Activated T-helper 1 cell treated with anti-CD3 and anti-CD28 coated beads, Interleukin-12 subunit alpha, Interleukin-12 subunit beta, Interleukin-2, Interleukin-4 antibody, amounts not matched to agents 30 ng/mL and 10 ng/mL and 1 ng/mL, durations not matched to agents 14 hours and 24 hours and 36 hours (primary cell): ENCODE measurements at regions of chr19 and their contacts with region 1.

Region 1: GRCh38 chr19:49451430-49452181 is at the start of gene PIH1D1:
- DNase-seq: peak; percentile 94
- H3K4me3 Mint-ChIP-seq: peak within 1 kb of the TSS; percentile 96
- H3K27ac Mint-ChIP-seq: peak within 1 kb of the TSS; percentile 99
- H3K4me1 Mint-ChIP-seq: peaks cover 55% of the 10 kb centered on the region
- H3K27me3 Mint-ChIP-seq: no peaks in the 10 kb centered on the region
- total RNA-seq, gene PIH1D1: 124 and 126 TPM in 2 replicates

Region 2: GRCh38 chr19:49315111-49315510 is 136.5 kb before region 1 on chr19:
- intact Hi-C with region 1: no loop called
- DNase-seq: no peak
- H3K4me3 Mint-ChIP-seq: no peak overlapping the region
- H3K27ac Mint-ChIP-seq: no peak overlapping the region
- H3K4me1 Mint-ChIP-seq: no peaks in the 10 kb centered on the region
- H3K27me3 Mint-ChIP-seq: peaks cover 3% of the 10 kb centered on the region

Region 3: DNA sequence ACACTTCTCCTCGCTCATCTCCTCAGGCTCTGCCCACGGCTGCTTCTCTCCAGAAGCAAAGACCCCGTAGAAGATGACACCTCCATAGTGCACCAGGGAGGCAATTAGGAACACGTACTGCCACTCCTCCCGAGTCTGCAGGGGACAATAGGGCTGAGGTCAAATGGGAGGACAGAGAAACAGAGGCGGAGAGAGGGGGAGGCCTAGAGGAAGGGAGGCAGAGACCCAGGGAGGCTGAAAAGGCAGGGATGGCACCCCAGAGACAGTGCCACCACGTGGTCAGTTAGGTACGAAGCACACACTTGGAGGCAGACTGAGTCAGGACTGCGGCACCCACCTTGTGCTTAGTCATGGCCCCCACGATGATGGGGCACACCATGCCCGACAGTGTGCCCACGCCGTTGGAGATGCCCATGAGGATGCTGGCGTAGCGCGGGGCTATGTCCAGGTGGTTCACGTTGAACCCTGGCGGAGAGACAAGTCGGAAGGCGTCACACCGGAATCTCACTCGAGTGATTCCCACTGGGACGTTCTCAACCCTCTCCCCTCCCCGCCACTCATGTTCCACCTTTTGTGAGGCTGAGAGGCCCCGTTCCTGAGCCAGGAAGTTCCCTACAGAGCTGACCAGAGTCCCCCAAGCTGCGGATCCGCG is 20.8 kb before region 1 on chr19:
- intact Hi-C with region 1: no loop called
- DNase-seq: no peak
- H3K4me3 Mint-ChIP-seq: no peak overlapping the region
- H3K27ac Mint-ChIP-seq: no peak overlapping the region
- H3K4me1 Mint-ChIP-seq: peaks cover 31% of the 10 kb centered on the region
- H3K27me3 Mint-ChIP-seq: peaks cover 85% of the 10 kb centered on the region

Region 4: GRCh38 chr19:49487277-49488045 is 35.9 kb after region 1 on chr19 and contains the start of gene RPL13A:
- intact Hi-C with region 1: loop called (anchors 1 kb)
- DNase-seq: peak; percentile 100
- H3K4me3 Mint-ChIP-seq: peak within 1 kb of the TSS; percentile 98
- H3K27ac Mint-ChIP-seq: peak within 1 kb of the TSS; percentile 94
- H3K4me1 Mint-ChIP-seq: peaks cover 27% of the 10 kb centered on the region
- H3K27me3 Mint-ChIP-seq: peaks cover 4% of the 10 kb centered on the region
- total RNA-seq, gene RPL13A: 2,876 and 2,988 TPM in 2 replicates

Region 5: DNA sequence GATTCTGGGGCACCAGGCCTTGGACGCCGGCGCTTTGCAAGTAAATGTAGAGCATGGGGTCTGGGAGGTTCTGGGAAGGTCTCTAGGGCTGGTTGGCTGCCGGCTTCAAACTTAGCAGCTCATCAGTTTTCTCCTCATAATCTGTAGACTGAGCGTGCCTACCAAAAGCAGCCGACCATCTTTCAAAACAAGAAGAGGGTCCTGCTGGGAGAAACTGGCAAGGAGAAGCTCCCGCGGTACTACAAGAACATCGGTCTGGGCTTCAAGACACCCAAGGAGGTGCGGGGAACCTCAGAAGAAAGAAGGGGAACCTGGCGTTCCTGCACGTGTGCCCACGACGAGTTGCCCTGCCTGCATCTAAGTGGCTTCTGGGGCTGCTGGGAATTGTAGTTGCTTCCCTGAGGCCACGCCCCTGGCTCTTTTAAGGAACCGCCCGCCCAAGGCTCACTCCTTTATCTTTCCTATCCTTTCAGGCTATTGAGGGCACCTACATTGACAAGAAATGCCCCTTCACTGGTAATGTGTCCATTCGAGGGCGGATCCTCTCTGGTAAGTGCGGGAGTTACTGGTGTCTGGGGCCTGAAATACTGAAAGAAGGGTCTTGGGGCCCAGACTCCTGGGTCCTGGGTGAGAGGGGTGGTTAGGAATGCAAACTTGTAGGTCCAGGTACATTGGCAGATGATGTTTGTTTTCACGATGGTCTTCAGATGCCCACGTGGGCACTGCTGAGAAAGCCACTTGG is 45.6 kb after region 1 on chr19:
- intact Hi-C with region 1: loop called (anchors 1 kb)
- DNase-seq: peak; percentile 65
- H3K4me3 Mint-ChIP-seq: peak overlapping the region; percentile 91
- H3K27ac Mint-ChIP-seq: peak overlapping the region; percentile 94
- H3K4me1 Mint-ChIP-seq: peaks cover 64% of the 10 kb centered on the region
- H3K27me3 Mint-ChIP-seq: no peaks in the 10 kb centered on the region